GM13977 (cell line): ENCODE measurements at regions of chr12 and their contacts with region 1.

Region 1: GRCh38 chr12:91620992-91621391 is 438.4 kb upstream of the DCN start:
- DNase-seq: no peak
- CTCF ChIP-seq: no peak

Region 2: DNA sequence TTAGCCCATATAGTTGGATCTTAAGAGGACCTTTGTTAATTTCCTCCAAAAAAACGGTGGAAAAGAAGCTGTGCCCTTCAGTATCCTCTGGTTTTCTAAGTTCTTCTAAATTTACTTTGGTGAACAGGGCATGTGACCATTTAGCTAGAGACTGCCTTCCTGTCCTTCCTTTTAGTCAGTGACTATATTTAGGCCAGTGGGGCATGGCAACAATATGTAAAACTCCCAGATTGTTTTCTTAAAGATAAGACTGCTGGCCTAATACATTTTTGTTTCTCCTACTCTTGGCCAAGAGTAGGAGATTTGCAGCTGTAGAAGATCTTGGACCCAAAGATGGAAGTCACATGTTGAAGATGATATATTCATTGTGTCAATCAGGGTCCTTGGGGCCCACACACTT is 113.2 kb before region 1 on chr12:
- in situ Hi-C with region 1: loop called (anchors 25 kb)
- DNase-seq: no peak
- CTCF ChIP-seq: no peak

Region 3: DNA sequence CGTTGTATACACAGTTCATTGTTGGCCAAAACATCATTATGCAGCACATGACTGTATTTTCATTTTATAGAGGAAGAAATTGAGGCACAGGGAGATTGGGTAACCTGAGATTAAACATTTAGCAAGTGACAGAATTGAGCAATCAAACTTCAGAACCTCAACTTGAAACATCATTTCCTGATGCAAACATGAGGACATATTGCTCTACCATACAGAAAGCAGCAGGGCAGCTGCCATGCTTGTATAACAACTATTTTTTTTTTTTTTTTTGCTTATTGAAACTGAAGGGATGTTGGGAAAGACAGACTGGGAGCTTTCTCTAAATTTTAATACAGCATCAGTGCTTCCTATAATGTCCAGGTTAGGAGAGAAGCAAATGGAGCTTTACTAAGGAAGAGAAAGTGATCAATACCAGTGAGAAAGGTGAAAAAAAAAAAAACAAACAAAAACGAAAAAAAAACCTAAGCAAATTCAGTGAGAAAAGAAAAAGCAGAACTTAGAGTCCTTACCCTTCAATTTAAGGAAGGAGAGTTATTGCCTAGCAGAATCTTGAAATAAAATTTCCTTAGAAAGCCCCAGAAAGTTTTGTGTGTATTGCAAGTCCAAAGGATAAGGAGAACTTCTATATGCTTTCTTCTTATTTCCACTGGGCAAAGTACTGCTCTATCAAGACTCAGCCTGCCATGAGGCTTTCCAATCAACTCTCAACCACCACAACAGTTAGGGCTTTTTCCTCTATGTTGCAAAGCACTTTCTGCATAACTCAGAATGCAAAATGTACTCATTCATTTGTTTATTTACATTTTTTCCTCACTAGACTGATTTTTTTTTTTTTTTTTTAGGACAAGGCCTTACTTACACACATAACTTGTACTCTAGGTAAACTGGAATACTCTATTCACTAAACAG is 503.0 kb after region 1 on chr12:
- in situ Hi-C with region 1: no loop called
- DNase-seq: no peak
- CTCF ChIP-seq: no peak